Cardiac septum (tissue), 1 donor: ENCODE measurements at regions of chr3 and their contacts with region 1.

Region 1: DNA sequence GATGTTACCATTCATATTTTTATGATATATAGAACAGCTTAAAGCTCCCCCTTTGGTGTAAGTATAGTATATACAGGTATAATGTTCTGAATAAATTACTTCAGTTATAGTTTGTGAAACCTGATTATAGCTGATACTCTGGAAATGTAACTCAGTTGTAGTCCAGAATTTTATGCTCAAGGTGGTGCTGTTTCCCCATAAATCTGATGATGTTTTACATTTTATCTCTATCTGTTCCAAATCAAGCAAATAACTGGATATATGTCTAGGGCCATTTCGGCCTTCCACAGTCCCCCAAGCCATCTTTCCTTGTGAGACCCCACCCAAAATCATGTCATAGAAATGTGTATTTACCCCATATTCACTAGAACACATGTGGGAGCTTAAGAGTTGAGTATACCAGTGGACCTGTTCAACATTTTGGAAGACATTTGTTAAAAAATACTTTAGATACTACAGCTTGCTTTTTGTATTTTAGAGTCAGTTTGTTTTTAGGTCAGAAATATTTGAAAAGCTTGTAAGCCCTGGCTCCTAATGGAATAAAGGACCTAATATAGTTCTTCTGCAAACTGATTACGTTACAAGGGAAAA is 107.1 kb downstream of the ATG7 start:
- DNase-seq: no peak

Region 2: DNA sequence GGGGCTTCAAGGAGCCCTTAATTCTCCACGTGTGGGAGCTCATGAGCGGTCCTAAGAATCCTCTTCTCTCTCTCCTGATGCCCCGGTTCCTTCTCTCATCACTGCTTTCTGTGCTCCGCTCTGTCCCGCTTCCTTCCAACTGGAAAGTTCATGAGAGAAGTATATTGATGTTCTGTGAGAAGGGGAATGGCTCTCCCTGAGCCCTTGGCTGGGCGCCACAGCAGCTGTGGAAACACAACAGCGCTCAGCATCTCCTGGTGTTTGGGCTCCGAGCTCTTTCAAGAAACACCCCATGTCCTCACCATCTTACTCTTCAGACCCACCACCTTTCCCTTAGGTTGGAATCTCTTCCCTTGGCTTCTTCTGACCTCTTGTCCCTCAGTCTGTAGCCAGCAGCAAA is 102.7 kb after region 1 on chr3:
- intact Hi-C with region 1: no loop called
- DNase-seq: no peak

Region 3: GRCh38 chr3:11561341-11561943 is 182.1 kb after region 1 on chr3:
- intact Hi-C with region 1: loop called (anchors 5 kb)
- DNase-seq: no peak

Region 4: GRCh38 chr3:11803977-11804892 is 424.9 kb after region 1 on chr3:
- intact Hi-C with region 1: loop called (anchors 1 kb)
- DNase-seq: no peak